ENCODE measurements at regions of chr12 and their contacts with region 1.

Region 1: DNA sequence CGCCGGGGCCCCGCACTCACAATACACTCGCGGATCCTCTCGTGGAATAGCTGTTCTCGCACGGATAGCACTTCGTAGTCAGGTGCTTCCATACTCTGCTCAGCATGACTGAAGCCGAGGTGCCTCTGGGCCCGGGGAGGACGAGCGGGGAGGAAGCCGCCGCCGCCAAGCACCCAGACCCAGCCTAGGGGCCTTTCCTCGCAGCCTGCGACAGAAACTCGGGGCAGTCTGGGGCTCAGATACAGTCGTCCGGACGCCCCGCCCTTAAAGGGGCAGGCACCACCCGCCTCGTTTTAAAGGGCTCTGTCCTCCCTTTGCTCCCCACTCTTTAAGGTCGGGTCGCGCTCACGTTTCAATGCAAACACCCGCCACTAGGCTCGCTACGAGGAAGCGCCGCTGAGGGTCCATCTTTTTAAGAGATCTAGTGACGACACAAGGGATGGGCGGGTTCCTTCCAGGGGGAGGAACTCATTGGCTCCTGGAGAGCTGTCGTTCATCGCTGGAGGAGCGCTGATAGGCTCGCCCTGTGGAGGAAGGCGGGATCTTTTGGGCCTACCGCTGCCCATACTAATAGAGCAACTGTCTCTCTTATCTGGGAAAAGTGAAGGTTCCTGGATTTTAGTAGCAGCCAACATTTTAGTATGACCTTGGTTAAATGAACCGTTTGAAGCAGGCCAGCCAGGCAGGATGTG is at the start of gene LMBR1L:
- DNase-seq: peak; percentile 100
- H3K4me3 ChIP-seq: peak within 1 kb of the TSS; percentile 74 to 89 (median 80)
- H3K27ac ChIP-seq: peak within 1 kb of the TSS; percentile 94 to 99 (median 96)
- H3K4me1 ChIP-seq: peaks cover 38 to 50% (median 48%) of the 10 kb centered on the region in 4 donors
- H3K27me3 ChIP-seq: no peaks in the 10 kb centered on the region
- CTCF ChIP-seq: peak; percentile 23 to 62 (median 59)
- EP300 ChIP-seq: no peak
- POLR2A ChIP-seq: peak; percentile 68
- total RNA-seq, gene LMBR1L: 24.7 to 54.0 (median 34.3) TPM

Region 2: GRCh38 chr12:49055981-49056754 is 54.4 kb before region 1 on chr12:
- intact Hi-C with region 1: no loop called
- DNase-seq: no peak
- H3K4me3 ChIP-seq: peak overlapping the region; percentile 21 to 100 (median 87)
- H3K27ac ChIP-seq: peak overlapping the region; percentile 24 to 98 (median 38)
- H3K4me1 ChIP-seq: peaks cover 42 to 56% (median 50%) of the 10 kb centered on the region in 4 donors
- H3K27me3 ChIP-seq: no peaks in the 10 kb centered on the region
- CTCF ChIP-seq: no peak
- EP300 ChIP-seq: no peak
- POLR2A ChIP-seq: no peak

Region 3: GRCh38 chr12:49069507-49070346 is 40.9 kb before region 1 on chr12 and contains the start of gene RHEBL1:
- intact Hi-C with region 1: loop called (anchors 5 kb)
- DNase-seq: peak; percentile 100
- H3K4me3 ChIP-seq: peak within 1 kb of the TSS; percentile 73 to 90 (median 80)
- H3K27ac ChIP-seq: peak within 1 kb of the TSS; percentile 71 to 80 (median 77)
- H3K4me1 ChIP-seq: peaks cover 14 to 20% (median 16%) of the 10 kb centered on the region in 4 donors
- H3K27me3 ChIP-seq: no peaks in the 10 kb centered on the region
- CTCF ChIP-seq: peak in 2 of 3 experiments; percentile 3 to 41
- EP300 ChIP-seq: no peak
- POLR2A ChIP-seq: no peak
- total RNA-seq, gene RHEBL1: 0.40 to 0.97 TPM in 2 of 4 donors, not detected in the others

Measured in esophagus muscularis mucosa (tissue), 4 donors.